ENCODE measurements at regions of chr16 and their contacts with region 1.

Region 1: DNA sequence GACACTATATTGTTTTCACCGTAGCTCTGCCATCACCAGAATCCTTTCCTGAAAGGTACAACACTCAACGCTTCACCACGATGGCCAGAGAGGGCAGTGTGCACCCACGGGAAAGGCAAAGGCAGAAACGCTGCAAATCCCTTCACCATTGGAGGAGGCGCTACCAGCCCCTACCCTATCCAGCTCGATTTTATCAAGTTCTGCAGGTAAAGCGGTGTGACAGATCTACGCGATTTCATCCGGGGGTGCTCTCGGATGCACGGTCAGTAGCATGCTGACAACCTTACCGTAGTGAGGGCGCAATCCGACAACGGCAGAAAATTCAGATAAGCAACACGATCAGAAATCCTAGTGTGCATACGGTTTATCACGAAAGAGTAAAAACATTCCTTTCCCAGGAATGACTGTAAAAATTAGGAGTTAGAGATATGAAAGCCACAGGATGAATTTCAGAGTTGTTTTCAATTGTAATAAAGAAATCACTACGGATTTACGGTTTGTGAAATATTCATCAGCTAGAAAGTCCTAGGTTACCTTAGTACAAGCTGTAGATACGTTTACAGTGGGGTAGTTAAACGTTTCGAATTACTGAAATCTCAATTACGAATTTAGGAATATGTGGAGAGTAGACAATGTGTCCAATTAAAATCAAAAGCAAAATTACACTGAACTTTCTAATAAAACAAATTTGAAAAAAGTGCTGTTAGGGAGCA is 1.8 kb downstream of the NETO2 start:
- DNase-seq: peak; percentile 92
- ATAC-seq: peak; percentile 76
- H3K4me3 Mint-ChIP-seq: peak overlapping the region; percentile 75
- H3K27ac Mint-ChIP-seq: peak overlapping the region; percentile 14; the same call in 1 of the 2 replicates
- H3K4me1 Mint-ChIP-seq: peaks cover 27% of the 10 kb centered on the region
- H3K27me3 Mint-ChIP-seq: peaks cover 35% of the 10 kb centered on the region
- CTCF ChIP-seq: peak; percentile 51; the same call in 1 of the 2 replicates

Region 2: GRCh38 chr16:47008174-47008573 is 133.8 kb before region 1 on chr16:
- CTCF ChIA-PET with region 1: no interaction called
- POLR2A ChIA-PET with region 1: no interaction called
- DNase-seq: no peak
- ATAC-seq: no peak
- H3K4me3 Mint-ChIP-seq: no peak overlapping the region
- H3K27ac Mint-ChIP-seq: no peak overlapping the region
- H3K4me1 Mint-ChIP-seq: no peaks in the 10 kb centered on the region
- H3K27me3 Mint-ChIP-seq: no peaks in the 10 kb centered on the region
- CTCF ChIP-seq: no peak

Region 3: GRCh38 chr16:47110939-47111338 is 31.0 kb before region 1 on chr16:
- CTCF ChIA-PET with region 1: interaction called, 26 read pairs
- POLR2A ChIA-PET with region 1: no interaction called
- DNase-seq: no peak
- ATAC-seq: peak; percentile 80
- H3K4me3 Mint-ChIP-seq: no peak overlapping the region
- H3K27ac Mint-ChIP-seq: no peak overlapping the region
- H3K4me1 Mint-ChIP-seq: no peaks in the 10 kb centered on the region
- H3K27me3 Mint-ChIP-seq: no peaks in the 10 kb centered on the region
- CTCF ChIP-seq: no peak

Region 4: DNA sequence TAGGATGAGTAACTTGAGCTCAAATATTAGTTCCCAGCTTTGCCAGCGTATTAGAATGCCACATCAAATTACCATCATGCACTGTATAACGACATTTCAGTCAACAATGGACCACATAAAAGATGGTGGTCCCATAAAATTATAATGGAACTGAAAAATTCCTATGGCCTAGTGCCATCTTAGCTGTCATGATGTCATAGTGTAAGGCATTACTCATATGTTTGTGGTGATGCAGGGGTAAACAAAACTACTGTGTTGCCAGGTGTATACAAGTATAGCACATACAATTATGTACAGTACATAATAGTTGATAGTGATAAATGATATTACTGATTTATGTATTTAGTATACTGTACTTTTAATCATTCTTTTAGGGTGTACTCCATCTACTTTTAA is 56.2 kb after region 1 on chr16:
- CTCF ChIA-PET with region 1: no interaction called
- POLR2A ChIA-PET with region 1: no interaction called
- DNase-seq: no peak
- ATAC-seq: no peak
- H3K4me3 Mint-ChIP-seq: no peak overlapping the region
- H3K27ac Mint-ChIP-seq: no peak overlapping the region
- H3K4me1 Mint-ChIP-seq: peaks cover 28% of the 10 kb centered on the region
- H3K27me3 Mint-ChIP-seq: no peaks in the 10 kb centered on the region
- CTCF ChIP-seq: no peak

Region 5: DNA sequence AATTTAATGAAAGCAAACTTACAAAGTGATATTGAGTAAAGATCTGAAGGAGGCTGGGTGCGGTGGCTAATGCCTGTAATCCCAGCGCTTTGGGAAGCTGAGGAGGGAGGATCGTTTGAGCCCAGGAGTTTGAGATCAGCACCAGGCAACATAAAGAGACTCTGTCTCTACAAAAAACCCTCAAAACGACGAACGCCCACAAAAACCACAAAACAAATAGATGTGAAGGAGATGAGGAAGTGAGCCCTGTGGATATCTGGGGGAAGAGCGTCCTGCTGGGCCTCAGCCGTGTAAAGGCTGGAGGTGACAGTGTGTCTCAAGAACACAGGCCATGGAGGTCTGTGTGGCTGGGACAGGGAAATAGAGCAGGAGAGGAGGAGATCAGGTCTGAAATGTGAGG is 250.2 kb after region 1 on chr16:
- CTCF ChIA-PET with region 1: no interaction called
- POLR2A ChIA-PET with region 1: no interaction called
- DNase-seq: no peak
- ATAC-seq: no peak
- H3K4me3 Mint-ChIP-seq: no peak overlapping the region
- H3K27ac Mint-ChIP-seq: peak overlapping the region; percentile 9
- H3K4me1 Mint-ChIP-seq: peaks cover 19% of the 10 kb centered on the region
- H3K27me3 Mint-ChIP-seq: no peaks in the 10 kb centered on the region
- CTCF ChIP-seq: no peak

Region 6: DNA sequence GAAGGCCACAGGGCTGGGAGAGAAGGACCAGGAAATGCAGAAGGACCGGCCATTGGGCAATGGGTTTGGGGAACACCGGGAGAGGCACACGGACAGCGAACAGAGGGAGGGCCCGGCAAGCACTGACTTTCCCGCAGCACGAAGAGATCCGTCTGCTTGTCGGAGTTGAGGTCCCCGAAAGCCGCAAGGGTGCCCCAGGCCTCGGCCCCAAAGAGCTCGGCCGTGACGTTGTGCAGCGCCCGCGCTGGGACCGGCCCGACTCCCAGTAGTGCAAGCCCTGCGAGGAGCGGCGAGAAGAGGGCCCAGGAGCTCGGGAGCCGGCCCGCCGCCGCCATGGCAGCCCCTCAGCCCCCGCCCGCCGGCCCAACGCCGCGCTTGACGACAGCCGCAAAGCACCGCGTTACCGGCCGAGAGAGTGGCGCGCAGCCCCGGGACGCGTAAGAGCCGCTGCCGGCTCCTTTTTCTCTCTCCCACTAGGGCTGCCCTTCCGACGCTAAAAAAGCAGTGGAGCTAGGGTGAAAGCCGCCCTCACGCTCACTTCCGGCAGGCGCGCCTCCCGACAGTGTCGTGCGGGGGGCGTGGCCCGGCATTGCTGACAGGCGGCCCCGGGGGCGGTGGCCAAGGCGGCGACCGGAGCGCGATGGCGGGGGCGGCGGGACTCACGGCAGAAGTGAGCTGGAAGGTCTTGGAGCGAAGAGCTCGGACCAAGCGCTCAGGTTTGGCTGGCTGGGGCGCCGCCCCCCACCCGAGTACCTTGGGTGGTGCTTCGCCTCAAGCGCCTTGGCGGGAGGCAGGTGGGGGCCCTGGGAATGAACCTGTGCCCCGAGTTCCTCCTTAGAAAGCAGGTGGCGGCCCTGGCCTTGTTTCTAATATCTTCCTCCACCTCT is 319.0 kb after region 1 on chr16 and contains the starts of genes ITFG1 and PHKB:
- CTCF ChIA-PET with region 1: interaction called, 16 read pairs
- POLR2A ChIA-PET with region 1: no interaction called
- DNase-seq: peak; percentile 93
- ATAC-seq: peak; percentile 91
- H3K4me3 Mint-ChIP-seq: peak within 1 kb of the TSS; percentile 99
- H3K27ac Mint-ChIP-seq: peak within 1 kb of the TSS; percentile 99
- H3K4me1 Mint-ChIP-seq: peaks cover 34% of the 10 kb centered on the region
- H3K27me3 Mint-ChIP-seq: no peaks in the 10 kb centered on the region
- CTCF ChIP-seq: no peak
- total RNA-seq, gene ITFG1: 20.5 to 22.3 TPM (median 21.1 TPM) in 3 replicates
- total RNA-seq, gene PHKB: 43.9 to 45.9 TPM (median 44.2 TPM) in 3 replicates

Region 7: GRCh38 chr16:48117217-48118105 is 975.5 kb after region 1 on chr16:
- CTCF ChIA-PET with region 1: interaction called, 11 read pairs
- POLR2A ChIA-PET with region 1: no interaction called
- DNase-seq: peak; percentile 93
- ATAC-seq: peak; percentile 96
- H3K4me3 Mint-ChIP-seq: no peak overlapping the region
- H3K27ac Mint-ChIP-seq: no peak overlapping the region
- H3K4me1 Mint-ChIP-seq: no peaks in the 10 kb centered on the region
- H3K27me3 Mint-ChIP-seq: no peaks in the 10 kb centered on the region
- CTCF ChIP-seq: peak; percentile 95

Measured in WTC11 (cell line).